WTC11 (cell line): ENCODE measurements at regions of chr11 and their contacts with region 1.

Region 1: DNA sequence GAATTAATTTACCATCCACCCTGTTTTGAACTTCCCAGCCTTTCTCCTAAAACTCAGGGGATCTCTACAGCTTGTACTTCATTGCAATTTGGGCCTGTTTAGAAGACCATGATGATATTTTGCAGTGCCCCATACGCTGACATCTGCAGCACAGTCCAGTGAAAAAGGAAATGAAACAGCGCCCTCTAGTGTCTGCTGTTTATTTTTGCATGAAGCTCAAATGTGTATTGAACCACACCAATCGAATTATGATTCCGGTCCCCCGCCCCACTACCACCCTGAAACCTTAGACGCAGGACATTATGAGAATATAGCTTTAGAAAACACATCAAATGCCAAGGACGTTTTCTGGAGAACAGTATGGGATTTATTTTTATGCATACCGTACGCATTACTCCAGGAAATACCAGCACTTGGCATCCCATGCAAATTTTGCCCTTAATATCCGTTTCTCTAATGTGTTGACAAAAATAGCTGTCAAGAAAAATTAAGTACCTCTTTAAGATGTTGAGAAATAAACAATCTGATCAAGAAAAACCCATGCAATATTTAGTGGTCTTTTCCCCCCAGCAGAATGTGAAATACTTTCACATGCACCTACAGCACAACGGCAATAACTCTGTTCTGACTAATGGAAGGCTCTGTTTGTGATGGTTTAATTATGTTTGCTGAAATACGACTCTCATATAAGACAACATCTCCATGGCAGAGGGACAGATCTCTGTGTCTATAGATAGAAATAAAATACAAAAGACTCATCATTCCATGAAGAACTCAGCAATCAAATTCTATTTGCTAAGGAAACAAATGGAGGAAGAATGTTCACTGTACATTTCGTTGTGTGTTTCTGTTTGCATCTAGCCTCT is 93.9 kb downstream of the TECTA start:
- DNase-seq: peak; percentile 49
- ATAC-seq: peak; percentile 86
- H3K4me3 Mint-ChIP-seq: no peak overlapping the region
- H3K27ac Mint-ChIP-seq: no peak overlapping the region
- H3K4me1 Mint-ChIP-seq: peaks cover 48% of the 10 kb centered on the region
- H3K27me3 Mint-ChIP-seq: no peaks in the 10 kb centered on the region
- CTCF ChIP-seq: peak; percentile 90

Region 2: DNA sequence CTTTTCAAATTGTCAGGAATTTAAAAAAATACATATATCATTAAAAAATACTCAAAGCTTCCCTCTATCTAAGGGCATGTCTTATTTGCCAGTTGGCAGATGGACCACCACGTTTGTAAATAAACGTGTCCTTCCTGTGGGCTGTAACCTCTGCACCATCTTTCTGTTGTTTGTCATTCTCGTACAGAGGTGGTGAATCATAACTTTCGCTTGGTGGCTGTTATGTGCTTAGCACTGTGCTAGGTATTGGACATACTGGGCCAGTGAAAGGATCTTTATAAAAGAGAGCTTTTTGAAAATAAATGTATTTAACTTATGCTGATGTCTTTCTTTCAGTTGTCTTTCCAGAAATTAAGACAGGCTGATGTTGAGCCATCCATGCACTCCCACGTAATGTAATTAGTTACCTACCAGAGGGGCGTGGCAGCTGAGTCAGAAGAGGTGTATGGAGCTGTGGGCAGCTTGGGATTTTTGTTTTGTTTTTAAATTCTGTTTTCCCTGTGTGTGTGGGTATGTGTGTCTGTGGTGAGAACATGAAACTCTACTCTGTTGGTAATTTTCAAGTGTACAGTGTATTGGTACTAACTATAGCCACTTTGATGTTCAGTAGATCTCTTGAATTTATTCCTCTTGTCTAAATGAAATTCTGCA is 31.2 kb before region 1 on chr11:
- CTCF ChIA-PET with region 1: interaction called, 12 read pairs
- POLR2A ChIA-PET with region 1: no interaction called
- DNase-seq: no peak
- ATAC-seq: no peak
- H3K4me3 Mint-ChIP-seq: no peak overlapping the region
- H3K27ac Mint-ChIP-seq: no peak overlapping the region
- H3K4me1 Mint-ChIP-seq: peaks cover 32% of the 10 kb centered on the region
- H3K27me3 Mint-ChIP-seq: no peaks in the 10 kb centered on the region
- CTCF ChIP-seq: no peak

Region 3: GRCh38 chr11:121241343-121242211 is 46.6 kb after region 1 on chr11:
- CTCF ChIA-PET with region 1: interaction called, 12 read pairs
- POLR2A ChIA-PET with region 1: no interaction called
- DNase-seq: peak; percentile 23
- ATAC-seq: peak; percentile 60
- H3K4me3 Mint-ChIP-seq: no peak overlapping the region
- H3K27ac Mint-ChIP-seq: no peak overlapping the region
- H3K4me1 Mint-ChIP-seq: peaks cover 53% of the 10 kb centered on the region
- H3K27me3 Mint-ChIP-seq: peaks cover 3% of the 10 kb centered on the region; the same call in 1 of the 2 replicates
- CTCF ChIP-seq: no peak

Region 4: GRCh38 chr11:121557348-121557747 is 362.4 kb after region 1 on chr11:
- CTCF ChIA-PET with region 1: no interaction called
- POLR2A ChIA-PET with region 1: no interaction called
- DNase-seq: no peak
- ATAC-seq: no peak
- H3K4me3 Mint-ChIP-seq: no peak overlapping the region
- H3K27ac Mint-ChIP-seq: 0 out of 2 replicates have a peak overlapping the region, but pooled peaks have one; percentile 34
- H3K4me1 Mint-ChIP-seq: no peaks in the 10 kb centered on the region
- H3K27me3 Mint-ChIP-seq: no peaks in the 10 kb centered on the region
- CTCF ChIP-seq: no peak